Heart right ventricle (tissue), 16 donors: ENCODE measurements at regions of chr2 and their contacts with region 1.

Region 1: DNA sequence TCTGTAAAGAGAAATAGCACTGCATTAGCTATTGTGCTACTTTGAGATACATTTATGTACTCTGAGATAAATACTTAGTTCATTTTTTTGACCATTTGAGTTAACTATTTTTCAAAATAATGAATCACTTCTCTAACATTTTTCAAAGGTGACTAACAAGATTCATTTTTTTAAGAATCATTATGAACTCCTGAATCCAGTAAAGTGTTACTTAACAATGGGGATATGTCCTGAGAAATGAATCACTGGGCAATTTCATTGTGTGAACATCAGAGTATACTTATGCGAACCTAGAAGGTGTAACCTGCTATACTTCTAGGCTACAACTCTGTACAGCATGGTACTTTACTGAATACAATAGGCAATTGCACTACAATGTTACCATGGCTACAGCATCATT is 355.8 kb downstream of the ARL6IP6 start:
- DNase-seq: no peak
- ATAC-seq: no peak
- H3K4me3 ChIP-seq: no peak overlapping the region
- H3K27ac ChIP-seq: no peak overlapping the region
- H3K4me1 ChIP-seq: no peaks in the 10 kb centered on the region
- H3K27me3 ChIP-seq: no peaks in the 10 kb centered on the region
- CTCF ChIP-seq: no peak

Region 2: GRCh38 chr2:153169609-153170008 is 95.4 kb after region 1 on chr2:
- intact Hi-C with region 1: loop called in 1 of 10 experiments (anchors 5 kb)
- DNase-seq: no peak
- ATAC-seq: no peak
- H3K4me3 ChIP-seq: no peak overlapping the region
- H3K27ac ChIP-seq: no peak overlapping the region
- H3K4me1 ChIP-seq: no peaks in the 10 kb centered on the region
- H3K27me3 ChIP-seq: no peaks in the 10 kb centered on the region
- CTCF ChIP-seq: no peak

Region 3: DNA sequence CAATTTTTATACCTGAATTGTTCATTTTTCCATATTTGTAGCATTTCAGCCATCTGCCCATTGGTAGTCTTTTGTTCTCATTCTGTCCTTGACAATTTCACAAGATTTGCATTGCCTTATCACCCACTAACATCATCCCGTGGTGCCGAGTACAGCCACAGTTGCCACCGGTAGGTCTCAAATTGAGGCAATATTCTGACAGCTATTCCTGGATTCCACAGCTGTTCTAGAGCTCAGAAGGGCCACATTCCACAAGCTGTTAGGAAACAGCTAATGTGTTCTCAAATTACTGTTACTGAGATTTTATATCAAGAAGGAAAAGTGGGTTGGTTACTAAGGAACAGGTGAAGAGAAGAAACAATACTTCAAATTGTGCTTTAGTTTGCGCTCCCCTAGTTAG is 225.6 kb after region 1 on chr2:
- intact Hi-C with region 1: no loop called
- DNase-seq: no peak
- ATAC-seq: no peak
- H3K4me3 ChIP-seq: no peak overlapping the region
- H3K27ac ChIP-seq: no peak overlapping the region
- H3K4me1 ChIP-seq: no peaks in the 10 kb centered on the region
- H3K27me3 ChIP-seq: no peaks in the 10 kb centered on the region
- CTCF ChIP-seq: no peak